Mammary epithelial cell (primary cell): ENCODE measurements at regions of chr9 and their contacts with region 1.

Region 1: GRCh38 chr9:24516463-24516862 is 29.2 kb downstream of the IZUMO3 start:
- DNase-seq: no peak
- H3K4me3 ChIP-seq: no peak overlapping the region
- H3K27ac ChIP-seq: no peak overlapping the region
- H3K4me1 ChIP-seq: no peaks in the 10 kb centered on the region
- H3K27me3 ChIP-seq: no peaks in the 10 kb centered on the region
- CTCF ChIP-seq: no peak

Region 2: GRCh38 chr9:24500761-24501160 is 15.7 kb before region 1 on chr9:
- CTCF ChIA-PET with region 1: no interaction called
- dilution Hi-C with region 1: no loop called
- in situ Hi-C with region 1: no loop called
- intact Hi-C with region 1: loop called (anchors 1 kb)
- DNase-seq: no peak
- H3K4me3 ChIP-seq: no peak overlapping the region
- H3K27ac ChIP-seq: no peak overlapping the region
- H3K4me1 ChIP-seq: no peaks in the 10 kb centered on the region
- H3K27me3 ChIP-seq: no peaks in the 10 kb centered on the region
- CTCF ChIP-seq: no peak